ENCODE measurements at regions of chr15 and their contacts with region 1.

Region 1: GRCh38 chr15:65638681-65639089 is 16.9 kb downstream of the SLC24A1 start:
- DNase-seq: no peak
- ATAC-seq: peak; percentile 81

Region 2: GRCh38 chr15:65318870-65319356 is 319.8 kb before region 1 on chr15:
- intact Hi-C with region 1: no loop called
- DNase-seq: peak; percentile 58 to 75
- ATAC-seq: peak; percentile 98

Region 3: GRCh38 chr15:65512807-65513416 is 125.8 kb before region 1 on chr15:
- intact Hi-C with region 1: no loop called
- DNase-seq: peak; percentile 16 to 40
- ATAC-seq: no peak

Region 4: DNA sequence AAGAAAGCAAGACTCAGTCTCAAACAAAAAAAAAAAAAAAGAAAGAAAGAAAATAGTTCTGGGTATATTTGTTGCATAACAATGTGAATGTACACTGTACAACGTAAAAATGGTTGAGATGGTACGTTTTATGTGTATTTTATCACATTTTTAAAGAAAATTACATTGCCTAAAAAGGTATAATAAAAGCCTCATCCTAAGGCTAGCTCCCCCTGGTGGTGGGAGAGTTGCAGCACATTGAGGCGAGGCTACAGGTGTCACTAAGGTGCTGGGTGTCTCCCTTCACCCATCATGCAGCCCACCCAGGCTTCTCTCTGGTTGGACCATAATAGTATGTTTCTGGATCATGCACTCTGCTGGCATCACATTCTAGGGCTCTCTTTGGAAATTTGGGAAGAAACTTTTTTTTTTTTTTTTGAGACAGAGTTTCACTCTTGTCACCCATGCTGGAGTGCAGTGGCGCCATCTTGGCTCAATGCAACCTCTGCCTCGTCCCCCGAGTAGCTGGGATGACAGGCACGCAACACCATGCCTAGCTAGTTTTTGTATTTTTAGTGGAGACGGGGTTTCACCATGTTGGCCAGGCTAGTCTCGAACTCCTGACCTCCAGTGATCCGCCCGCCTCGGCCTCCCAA is 218.3 kb after region 1 on chr15:
- intact Hi-C with region 1: loop called in 1 of 2 experiments (anchors 10 kb)
- DNase-seq: peak; percentile 50 to 86
- ATAC-seq: peak; percentile 80

Region 5: DNA sequence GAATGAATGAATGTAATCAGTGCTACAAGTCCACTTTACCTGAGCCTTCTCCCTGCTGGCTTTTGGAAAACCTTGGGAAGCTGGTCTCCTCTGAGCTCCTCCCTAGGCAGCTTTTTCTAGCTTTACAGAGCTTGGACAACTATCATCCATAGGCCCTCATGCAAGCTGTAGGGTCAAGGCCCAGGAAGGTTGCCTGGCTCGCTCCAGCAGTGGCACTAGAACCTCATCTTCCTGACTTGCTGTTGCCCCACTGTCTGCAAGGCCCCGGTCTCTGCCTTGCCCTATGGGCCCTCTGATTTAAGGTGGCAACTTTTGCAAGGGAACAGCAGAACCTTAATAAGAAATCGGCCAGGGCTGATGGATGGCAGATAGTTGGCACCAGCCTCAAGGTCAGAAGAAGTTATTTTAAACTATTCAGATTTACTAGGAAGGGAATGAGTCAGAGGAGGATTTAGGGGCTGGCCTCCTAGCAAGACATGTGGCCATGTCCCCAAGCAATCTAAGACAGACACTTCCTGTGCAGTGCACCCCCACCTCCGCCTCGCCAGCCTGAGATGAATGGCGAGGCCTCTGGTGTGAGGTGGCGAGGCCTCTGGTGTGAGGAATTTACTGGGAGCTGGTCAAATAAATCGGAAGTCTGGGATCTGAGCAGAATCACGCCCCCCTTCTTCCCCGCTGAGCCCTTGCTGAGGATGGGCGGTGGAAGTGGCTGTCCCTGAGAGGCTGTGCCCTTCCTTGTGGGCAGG is 434.1 kb after region 1 on chr15:
- intact Hi-C with region 1: no loop called
- DNase-seq: no peak
- ATAC-seq: no peak

Measured in left colon (tissue), 2 donors.